IMR-90 (cell line): ENCODE measurements at regions of chr16 and their contacts with region 1.

Region 1: DNA sequence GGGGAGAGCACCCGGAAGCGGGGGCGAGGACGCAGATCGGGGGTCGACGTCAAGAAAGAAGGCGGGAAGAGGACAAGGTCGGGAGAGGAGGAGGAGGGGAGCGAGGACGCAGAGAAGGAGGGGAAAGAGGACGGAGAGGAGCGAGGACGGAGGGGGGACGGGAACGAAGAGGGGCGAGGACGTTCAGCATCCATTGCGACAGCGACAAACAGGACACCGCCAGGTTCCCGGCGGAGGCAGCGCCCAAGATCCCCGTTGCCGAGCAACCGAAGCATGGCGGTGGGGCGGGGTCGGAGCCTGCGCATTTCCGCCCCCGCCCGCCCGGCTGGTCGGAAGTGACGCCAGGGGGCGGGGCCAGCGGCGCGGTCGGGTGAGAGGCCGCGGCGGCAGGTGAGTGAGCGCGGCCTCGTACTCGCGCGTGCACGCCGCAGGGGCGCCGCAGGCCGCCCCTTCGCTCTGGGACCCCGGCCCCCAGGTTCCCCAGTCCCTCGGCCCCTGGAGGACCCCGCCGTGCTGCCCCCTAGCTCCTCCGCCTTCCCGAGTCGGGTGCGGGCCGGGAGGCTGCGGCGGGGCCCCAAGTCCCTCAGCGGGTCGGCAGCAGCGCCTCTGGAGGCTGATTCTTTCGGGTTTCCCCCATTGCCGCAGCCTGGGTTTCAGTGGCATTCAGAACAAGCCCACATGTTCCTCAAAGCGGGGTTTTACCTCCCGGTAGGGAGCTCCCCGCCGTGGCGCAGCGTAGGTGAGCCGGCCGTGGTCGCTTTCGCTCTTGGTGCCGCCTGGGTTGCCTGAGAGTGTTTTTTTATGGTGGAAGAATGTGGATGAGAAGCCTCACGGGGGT is at the start of gene FAM234A:
- DNase-seq: peak; percentile 81
- ATAC-seq: peak; percentile 89
- H3K4me3 ChIP-seq: peak within 1 kb of the TSS; percentile 95
- H3K27ac ChIP-seq: peak within 1 kb of the TSS; percentile 98
- H3K4me1 ChIP-seq: peaks cover 2% of the 10 kb centered on the region; the same call in 1 of the 2 replicates
- H3K27me3 ChIP-seq: no peaks in the 10 kb centered on the region
- CTCF ChIP-seq: peak; percentile 34; the same call in 1 of the 2 replicates
- POLR2A ChIP-seq: peak; percentile 63
- RAD21 ChIP-seq: 0 out of 2 replicates have a peak, but pooled peaks have one; percentile 2
- total RNA-seq, gene FAM234A: 27.5 and 30.3 TPM in 2 replicates

Region 2: GRCh38 chr16:9903-10665 is 224.6 kb before region 1 on chr16:
- CTCF ChIA-PET with region 1: no interaction called
- POLR2A ChIA-PET with region 1: no interaction called
- dilution Hi-C with region 1: no loop called
- in situ Hi-C with region 1: no loop called
- intact Hi-C with region 1: no loop called
- DNase-seq: no peak
- ATAC-seq: peak; percentile 94
- H3K4me3 ChIP-seq: peak overlapping the region; percentile 31
- H3K27ac ChIP-seq: no peak overlapping the region; the same call in 1 of the 2 replicates
- H3K4me1 ChIP-seq: no peaks in the 10 kb centered on the region
- H3K27me3 ChIP-seq: no peaks in the 10 kb centered on the region
- CTCF ChIP-seq: no peak
- POLR2A ChIP-seq: no peak
- RAD21 ChIP-seq: no peak

Region 3: DNA sequence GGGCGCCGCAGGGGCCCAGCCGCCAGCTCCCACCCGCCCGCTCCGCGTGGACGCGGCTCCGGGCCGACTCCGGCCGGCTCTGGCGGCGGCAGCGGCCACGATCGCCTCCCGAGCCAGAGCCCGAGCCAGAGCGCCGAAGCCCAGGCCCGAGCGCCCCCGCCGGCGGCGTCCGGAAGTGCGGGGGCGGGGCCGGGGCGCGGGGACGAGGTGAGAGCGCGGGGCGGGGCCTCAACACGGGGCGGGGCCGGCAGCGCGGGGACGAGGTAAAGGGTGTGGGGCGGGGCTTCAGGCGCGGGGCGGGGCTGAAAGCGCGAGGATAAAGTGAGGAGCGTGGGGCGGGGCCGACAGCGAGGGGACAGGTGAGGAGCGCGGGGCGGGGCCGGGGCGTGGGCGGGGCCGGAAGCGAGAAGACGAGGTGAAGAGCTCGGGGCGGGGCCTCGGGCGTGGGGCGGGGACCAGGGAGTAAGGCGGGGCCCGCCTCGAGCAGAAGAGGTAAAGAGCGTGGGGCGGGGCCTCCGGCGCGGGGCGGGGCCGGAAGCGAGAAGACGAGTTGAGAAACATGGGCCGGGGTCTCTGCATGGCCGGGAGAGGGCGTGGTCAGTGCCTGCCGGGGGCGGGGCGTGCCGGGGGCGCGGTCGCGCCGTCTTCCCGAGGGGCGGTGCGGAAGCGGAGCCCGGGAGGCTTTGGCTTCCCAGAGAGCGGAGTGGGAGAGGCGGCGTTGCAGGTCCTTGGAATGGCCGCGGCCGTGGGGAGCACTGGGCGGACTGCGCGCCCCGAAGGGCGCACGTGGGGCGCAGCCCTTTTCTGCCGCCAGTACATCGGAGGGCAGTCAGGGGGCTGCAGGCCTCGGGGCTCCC is 118.1 kb after region 1 on chr16 and contains the start of gene AXIN1:
- CTCF ChIA-PET with region 1: no interaction called
- POLR2A ChIA-PET with region 1: no interaction called
- dilution Hi-C with region 1: no loop called
- in situ Hi-C with region 1: no loop called
- intact Hi-C with region 1: loop called (anchors 2 kb)
- DNase-seq: peak; percentile 85
- ATAC-seq: peak; percentile 88
- H3K4me3 ChIP-seq: peak within 1 kb of the TSS; percentile 57
- H3K27ac ChIP-seq: peak within 1 kb of the TSS; percentile 18; the same call in 1 of the 2 replicates
- H3K4me1 ChIP-seq: peaks cover 5% of the 10 kb centered on the region; the same call in 1 of the 2 replicates
- H3K27me3 ChIP-seq: no peaks in the 10 kb centered on the region
- CTCF ChIP-seq: peak; percentile 60
- POLR2A ChIP-seq: peak; percentile 60
- RAD21 ChIP-seq: peak; percentile 60
- total RNA-seq, gene AXIN1: 10.9 and 11.9 TPM in 2 replicates